ENCODE measurements at regions of chr9 and their contacts with region 1.

Region 1: DNA sequence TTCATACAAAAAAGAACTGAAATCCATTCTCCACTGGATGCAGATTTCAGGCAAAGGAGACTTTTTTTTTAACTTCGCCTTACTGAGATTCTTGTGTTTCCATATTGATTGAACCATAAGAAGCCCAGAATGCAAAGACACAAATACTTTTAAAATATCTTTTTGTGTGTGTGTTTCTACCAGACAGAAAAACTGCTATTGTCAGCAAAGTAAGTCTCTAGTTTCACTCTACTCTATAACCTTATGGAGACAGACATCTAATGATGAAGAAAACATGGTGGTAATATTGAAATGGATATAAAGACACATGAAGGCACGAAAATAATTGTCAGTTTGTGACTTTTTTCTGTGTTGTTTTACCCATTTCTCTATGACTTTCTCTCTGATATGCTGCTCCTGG is 260.3 kb upstream of the RORB start:
- DNase-seq: no peak
- ATAC-seq: no peak
- H3K4me3 ChIP-seq: no peak overlapping the region
- H3K27ac ChIP-seq: no peak overlapping the region
- H3K4me1 ChIP-seq: no peaks in the 10 kb centered on the region
- H3K27me3 ChIP-seq: no peaks in the 10 kb centered on the region
- CTCF ChIP-seq: no peak

Region 2: GRCh38 chr9:74016004-74016403 is 220.9 kb before region 1 on chr9:
- CTCF ChIA-PET with region 1: interaction called, 11 read pairs
- POLR2A ChIA-PET with region 1: no interaction called
- in situ Hi-C with region 1: no loop called
- intact Hi-C with region 1: no loop called
- DNase-seq: no peak
- ATAC-seq: no peak
- H3K4me3 ChIP-seq: no peak overlapping the region
- H3K27ac ChIP-seq: no peak overlapping the region
- H3K4me1 ChIP-seq: no peaks in the 10 kb centered on the region
- H3K27me3 ChIP-seq: no peaks in the 10 kb centered on the region
- CTCF ChIP-seq: no peak

Region 3: GRCh38 chr9:74132986-74133385 is 103.9 kb before region 1 on chr9:
- CTCF ChIA-PET with region 1: no interaction called
- POLR2A ChIA-PET with region 1: no interaction called
- in situ Hi-C with region 1: no loop called
- intact Hi-C with region 1: no loop called
- DNase-seq: no peak
- ATAC-seq: no peak
- H3K4me3 ChIP-seq: no peak overlapping the region
- H3K27ac ChIP-seq: no peak overlapping the region
- H3K4me1 ChIP-seq: no peaks in the 10 kb centered on the region
- H3K27me3 ChIP-seq: no peaks in the 10 kb centered on the region
- CTCF ChIP-seq: no peak

Region 4: GRCh38 chr9:74220327-74220726 is 16.5 kb before region 1 on chr9:
- CTCF ChIA-PET with region 1: no interaction called
- POLR2A ChIA-PET with region 1: no interaction called
- in situ Hi-C with region 1: no loop called
- intact Hi-C with region 1: no loop called
- DNase-seq: no peak
- ATAC-seq: no peak
- H3K4me3 ChIP-seq: no peak overlapping the region
- H3K27ac ChIP-seq: no peak overlapping the region
- H3K4me1 ChIP-seq: no peaks in the 10 kb centered on the region
- H3K27me3 ChIP-seq: no peaks in the 10 kb centered on the region
- CTCF ChIP-seq: no peak

Measured in Panc1 (cell line).